ENCODE measurements at regions of chr4 and their contacts with region 1.

Region 1: GRCh38 chr4:87679449-87680169 is 29.5 kb downstream of the DMP1 start:
- DNase-seq: peak; percentile 38
- H3K4me3 ChIP-seq: no peak overlapping the region
- H3K27ac ChIP-seq: no peak overlapping the region
- H3K4me1 ChIP-seq: no peaks in the 10 kb centered on the region
- CTCF ChIP-seq: peak; percentile 92

Region 2: GRCh38 chr4:86769794-86770193 is 909.8 kb before region 1 on chr4:
- CTCF ChIA-PET with region 1: no interaction called
- POLR2A ChIA-PET with region 1: no interaction called
- intact Hi-C with region 1: no loop called
- DNase-seq: no peak
- H3K4me3 ChIP-seq: no peak overlapping the region
- H3K27ac ChIP-seq: no peak overlapping the region
- H3K4me1 ChIP-seq: no peaks in the 10 kb centered on the region
- CTCF ChIP-seq: no peak

Region 3: DNA sequence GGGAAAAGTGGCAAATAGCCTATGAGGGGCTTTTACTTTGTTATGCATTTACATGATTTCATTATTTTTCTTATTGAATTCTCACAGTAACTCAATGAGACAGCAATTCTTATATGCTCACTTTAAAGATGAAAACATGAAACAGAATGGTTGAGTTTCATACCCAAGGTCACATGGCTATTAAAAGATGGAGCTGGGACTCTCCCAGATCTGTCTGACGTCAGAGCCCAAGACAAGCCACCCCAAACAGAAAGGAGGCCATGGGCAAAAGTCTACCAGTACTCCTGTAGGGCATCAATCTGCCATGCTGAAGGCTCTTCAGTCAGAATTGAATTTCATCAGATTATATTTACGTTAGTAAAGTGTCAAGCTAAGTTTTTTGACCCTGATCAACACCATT is 301.8 kb before region 1 on chr4:
- CTCF ChIA-PET with region 1: no interaction called
- POLR2A ChIA-PET with region 1: no interaction called
- intact Hi-C with region 1: no loop called
- DNase-seq: no peak
- H3K4me3 ChIP-seq: no peak overlapping the region
- H3K27ac ChIP-seq: no peak overlapping the region
- H3K4me1 ChIP-seq: no peaks in the 10 kb centered on the region
- CTCF ChIP-seq: no peak

Region 4: GRCh38 chr4:87838890-87839591 is 159.4 kb after region 1 on chr4:
- CTCF ChIA-PET with region 1: no interaction called
- POLR2A ChIA-PET with region 1: no interaction called
- intact Hi-C with region 1: loop called (anchors 5 kb)
- DNase-seq: peak; percentile 24
- H3K4me3 ChIP-seq: no peak overlapping the region
- H3K27ac ChIP-seq: no peak overlapping the region
- H3K4me1 ChIP-seq: no peaks in the 10 kb centered on the region
- CTCF ChIP-seq: peak; percentile 83

Region 5: GRCh38 chr4:87853108-87853507 is 173.5 kb after region 1 on chr4:
- CTCF ChIA-PET with region 1: no interaction called
- POLR2A ChIA-PET with region 1: no interaction called
- intact Hi-C with region 1: loop called (anchors 5 kb)
- DNase-seq: peak; percentile 33
- H3K4me3 ChIP-seq: no peak overlapping the region
- H3K27ac ChIP-seq: no peak overlapping the region
- H3K4me1 ChIP-seq: no peaks in the 10 kb centered on the region
- CTCF ChIP-seq: peak; percentile 81

Region 6: DNA sequence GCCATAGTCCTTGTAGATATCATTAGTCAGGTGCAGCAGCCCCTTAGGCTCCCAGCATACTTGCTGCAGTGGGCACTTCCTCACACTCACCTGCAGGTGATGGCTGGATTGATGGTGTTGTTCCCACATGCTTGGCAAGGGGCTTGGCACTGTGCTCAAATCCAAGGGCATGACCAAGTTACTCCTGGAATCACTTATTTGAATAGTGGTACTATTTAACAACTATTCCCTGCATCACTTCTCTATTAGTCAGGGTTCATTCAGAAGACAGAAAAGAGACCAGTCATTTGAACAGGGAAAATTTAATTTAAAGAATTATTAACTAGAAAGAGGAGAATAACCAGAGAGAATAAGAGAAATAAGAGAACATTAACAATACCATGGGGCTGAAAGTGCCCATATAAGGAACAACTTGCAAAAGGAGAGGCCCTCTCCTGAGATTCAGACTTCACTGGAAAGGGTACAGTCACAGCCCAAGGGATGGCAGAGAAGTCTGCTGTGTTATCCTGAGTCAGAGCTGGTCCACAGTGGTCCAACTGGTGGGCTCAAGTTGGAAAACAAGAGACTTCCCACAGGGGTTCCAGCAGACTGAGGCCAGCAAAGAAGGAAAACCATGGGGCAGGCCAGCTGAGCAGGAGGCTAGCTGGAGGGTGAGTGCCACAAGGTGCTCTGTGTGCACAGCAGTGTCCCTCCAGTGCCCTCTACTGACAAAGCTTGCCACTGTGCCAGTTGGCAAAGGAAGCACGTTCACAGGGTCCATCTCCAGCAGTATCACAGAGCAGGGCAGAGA is 305.7 kb after region 1 on chr4:
- CTCF ChIA-PET with region 1: no interaction called
- POLR2A ChIA-PET with region 1: no interaction called
- intact Hi-C with region 1: loop called (anchors 5 kb)
- DNase-seq: peak; percentile 42
- H3K4me3 ChIP-seq: no peak overlapping the region
- H3K27ac ChIP-seq: no peak overlapping the region
- H3K4me1 ChIP-seq: no peaks in the 10 kb centered on the region
- CTCF ChIP-seq: peak; percentile 71

Region 7: DNA sequence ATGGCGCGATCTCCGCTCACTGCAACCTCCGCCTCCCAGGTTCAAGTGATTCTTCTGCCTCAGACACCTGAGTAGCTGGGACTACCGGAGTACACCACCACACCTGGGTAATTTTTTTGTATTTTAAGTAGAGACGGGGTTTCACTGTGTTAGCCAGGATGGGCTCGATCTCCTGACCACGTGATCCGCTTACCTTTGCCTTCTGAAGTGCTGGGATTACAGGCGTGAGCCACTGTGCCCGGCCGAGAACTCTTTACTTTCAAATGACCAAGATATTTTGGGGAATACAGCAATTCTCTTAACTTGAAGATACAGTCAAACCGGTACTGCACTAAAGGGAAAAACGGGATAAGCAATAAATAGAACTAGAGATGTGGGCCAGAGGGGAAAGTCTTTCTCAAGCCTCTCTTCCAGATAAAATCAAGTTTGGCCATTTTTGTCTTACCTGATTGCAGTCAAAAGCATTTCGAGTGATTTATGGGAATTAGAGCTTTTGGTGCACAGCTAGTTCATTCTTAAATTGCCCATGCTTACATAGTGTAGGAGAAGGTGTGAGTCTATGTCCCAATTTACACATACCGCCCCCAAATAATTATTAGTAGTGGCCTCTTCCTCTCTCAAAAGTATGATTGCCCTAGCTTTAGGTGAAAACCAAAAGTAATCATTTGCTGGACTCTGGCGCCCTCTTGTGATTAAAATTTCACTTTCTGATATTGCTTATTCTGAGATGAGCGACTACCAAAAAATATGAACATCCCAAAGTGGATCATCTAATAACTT is 532.1 kb after region 1 on chr4:
- CTCF ChIA-PET with region 1: no interaction called
- POLR2A ChIA-PET with region 1: no interaction called
- intact Hi-C with region 1: loop called (anchors 5 kb)
- DNase-seq: peak; percentile 65
- H3K4me3 ChIP-seq: no peak overlapping the region
- H3K27ac ChIP-seq: no peak overlapping the region
- H3K4me1 ChIP-seq: no peaks in the 10 kb centered on the region
- CTCF ChIP-seq: peak; percentile 93

Region 8: DNA sequence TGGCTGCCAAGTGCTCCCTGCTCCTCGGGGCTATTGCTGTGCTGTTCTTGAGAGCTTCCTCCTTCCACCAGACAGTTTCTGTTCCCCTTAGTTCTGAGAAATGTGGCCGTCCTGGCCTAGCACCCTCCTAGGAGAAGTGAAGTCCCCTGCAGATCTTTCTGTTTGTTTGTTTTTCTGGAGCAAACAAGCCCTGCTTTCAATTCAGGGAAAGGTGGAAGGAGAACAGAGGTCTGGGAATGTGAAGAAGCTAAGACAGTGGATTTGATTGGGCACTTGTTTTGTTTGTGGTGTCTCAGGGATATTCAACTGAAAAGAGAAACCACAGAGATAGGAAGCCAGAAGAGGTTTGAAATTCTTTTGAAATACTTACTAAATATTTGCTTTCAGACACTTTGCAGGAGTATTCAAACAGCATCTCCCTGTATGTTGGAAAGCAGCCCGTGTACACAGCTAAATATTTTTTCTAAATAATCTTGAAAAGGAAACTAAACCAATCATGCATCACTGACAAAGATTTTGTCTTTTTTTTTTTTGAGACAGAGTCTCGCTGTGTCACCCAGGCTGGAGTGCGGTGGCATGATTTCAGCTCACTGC is 641.3 kb after region 1 on chr4:
- CTCF ChIA-PET with region 1: no interaction called
- POLR2A ChIA-PET with region 1: no interaction called
- intact Hi-C with region 1: no loop called
- DNase-seq: peak; percentile 89
- H3K4me3 ChIP-seq: peak overlapping the region; percentile 57
- H3K27ac ChIP-seq: peak overlapping the region; percentile 90
- H3K4me1 ChIP-seq: peaks cover 44% of the 10 kb centered on the region
- CTCF ChIP-seq: no peak

Measured in OCI-LY7 (cell line).